ENCODE measurements at regions of chr15 and their contacts with region 1.

Region 1: GRCh38 chr15:51046799-51047482 is 47.8 kb downstream of the TNFAIP8L3 start:
- DNase-seq: no peak
- H3K4me3 ChIP-seq: no peak overlapping the region
- H3K27ac ChIP-seq: no peak overlapping the region
- H3K4me1 ChIP-seq: peaks cover 11% of the 10 kb centered on the region
- H3K27me3 ChIP-seq: no peaks in the 10 kb centered on the region
- CTCF ChIP-seq: no peak
- POLR2A ChIP-seq: no peak

Region 2: DNA sequence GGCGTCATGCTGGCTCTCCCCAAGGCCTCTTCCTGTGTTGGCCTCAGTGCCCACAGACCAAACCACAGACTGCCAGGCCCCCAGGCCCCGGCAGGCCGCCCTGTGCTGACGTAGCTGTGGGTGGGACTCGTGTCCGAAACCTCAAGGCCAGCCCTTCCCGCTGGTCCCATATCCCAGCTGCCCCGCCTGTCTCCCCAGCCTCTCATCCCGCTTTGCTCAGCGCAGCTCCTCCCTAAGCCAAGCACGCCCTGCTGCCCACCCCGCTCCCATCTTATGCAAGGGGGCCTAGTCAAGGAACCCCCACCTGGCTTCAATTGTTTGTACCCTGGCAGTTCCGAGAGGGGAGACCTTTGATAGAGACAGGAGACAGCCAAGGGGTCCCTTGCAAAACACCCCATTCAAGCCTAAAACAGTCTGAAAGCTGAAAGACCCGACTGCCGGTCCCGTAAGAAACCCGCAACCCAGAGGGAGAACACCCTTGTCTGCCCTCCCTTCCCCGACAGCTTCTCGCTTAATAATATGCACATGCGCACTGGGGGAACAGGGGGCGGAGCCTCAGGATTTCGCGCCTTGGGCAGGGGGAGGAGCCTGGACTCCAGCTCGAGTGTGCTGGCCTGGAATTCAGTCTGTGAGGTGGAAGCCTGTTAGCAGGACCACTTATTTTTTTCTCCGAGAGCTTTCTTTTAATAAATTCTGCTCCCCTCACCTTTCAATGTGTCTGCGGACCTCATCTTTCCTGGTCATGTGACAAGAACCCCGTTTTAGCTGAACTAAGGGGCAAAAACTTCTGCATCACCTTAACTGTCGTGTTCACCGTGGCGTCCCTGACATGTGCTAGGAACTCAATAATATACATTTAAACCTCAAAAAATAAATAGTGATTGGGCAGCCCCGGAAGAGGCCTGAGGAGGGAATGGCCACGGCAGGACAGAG is 30.5 kb after region 1 on chr15:
- intact Hi-C with region 1: loop called (anchors 5 kb)
- DNase-seq: no peak
- H3K4me3 ChIP-seq: no peak overlapping the region
- H3K27ac ChIP-seq: no peak overlapping the region
- H3K4me1 ChIP-seq: no peaks in the 10 kb centered on the region
- H3K27me3 ChIP-seq: no peaks in the 10 kb centered on the region
- CTCF ChIP-seq: no peak
- POLR2A ChIP-seq: no peak

Region 3: GRCh38 chr15:51108933-51109550 is 62.1 kb after region 1 on chr15:
- intact Hi-C with region 1: loop called (anchors 10 kb)
- DNase-seq: no peak
- H3K4me3 ChIP-seq: no peak overlapping the region
- H3K27ac ChIP-seq: peak overlapping the region; percentile 17 to 48
- H3K4me1 ChIP-seq: no peaks in the 10 kb centered on the region
- H3K27me3 ChIP-seq: no peaks in the 10 kb centered on the region
- CTCF ChIP-seq: no peak
- POLR2A ChIP-seq: no peak